Sigmoid colon (tissue), 7 donors: ENCODE measurements at regions of chr22 and their contacts with region 1.

Region 1: DNA sequence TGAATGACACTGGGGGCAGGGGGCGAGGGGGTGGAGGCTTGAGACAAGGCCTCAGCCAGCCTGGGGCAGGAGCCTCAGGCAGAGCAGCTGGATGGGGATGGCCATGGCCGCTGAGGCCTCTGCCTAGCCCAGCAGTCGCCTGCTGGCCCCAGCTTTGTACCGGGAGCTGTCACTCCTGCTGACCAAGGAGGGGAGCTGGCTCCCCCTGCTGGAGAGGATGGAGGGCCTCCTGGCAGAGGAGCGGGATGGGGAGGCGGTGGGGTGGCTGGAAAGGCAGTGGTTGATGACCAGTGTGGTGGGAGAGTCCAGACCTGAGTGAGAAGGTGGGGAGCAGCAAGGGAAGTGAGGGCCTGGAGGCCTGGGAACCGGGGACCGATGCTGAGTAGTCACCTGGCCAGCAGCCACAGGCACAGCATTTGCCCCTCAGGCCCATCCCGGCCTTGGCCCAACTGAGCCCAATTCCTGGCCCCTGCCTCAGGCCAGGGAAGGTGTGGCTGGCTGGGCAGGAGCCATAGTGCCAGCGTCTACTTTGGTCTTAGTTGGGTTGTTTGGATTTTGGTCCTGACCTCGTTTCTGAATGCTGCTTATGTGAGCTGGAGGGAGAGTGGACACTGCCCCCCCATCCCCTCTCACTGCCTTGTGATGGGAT is 6.0 kb upstream of the SUSD2 start:
- DNase-seq: peak; percentile 94
- H3K4me3 ChIP-seq: no peak overlapping the region
- H3K27ac ChIP-seq: peak overlapping the region; percentile 78 to 87 (median 84)
- H3K4me1 ChIP-seq: peaks cover 0 to 48% (median 43%) of the 10 kb centered on the region in 4 donors
- H3K27me3 ChIP-seq: no peaks in the 10 kb centered on the region
- CTCF ChIP-seq: peak; percentile 87 to 95 (median 89)
- EP300 ChIP-seq: no peak
- POLR2A ChIP-seq: no peak

Region 2: GRCh38 chr22:24133187-24133965 is 41.9 kb before region 1 on chr22:
- intact Hi-C with region 1: loop called (anchors 1 kb)
- DNase-seq: peak; percentile 75
- H3K4me3 ChIP-seq: no peak overlapping the region
- H3K27ac ChIP-seq: no peak overlapping the region
- H3K4me1 ChIP-seq: peaks cover 0 to 16% (median 15%) of the 10 kb centered on the region in 4 donors
- H3K27me3 ChIP-seq: no peaks in the 10 kb centered on the region
- CTCF ChIP-seq: peak; percentile 38 to 58 (median 49)
- EP300 ChIP-seq: no peak
- POLR2A ChIP-seq: no peak